ENCODE measurements at regions of chr10 and their contacts with region 1.

Region 1: DNA sequence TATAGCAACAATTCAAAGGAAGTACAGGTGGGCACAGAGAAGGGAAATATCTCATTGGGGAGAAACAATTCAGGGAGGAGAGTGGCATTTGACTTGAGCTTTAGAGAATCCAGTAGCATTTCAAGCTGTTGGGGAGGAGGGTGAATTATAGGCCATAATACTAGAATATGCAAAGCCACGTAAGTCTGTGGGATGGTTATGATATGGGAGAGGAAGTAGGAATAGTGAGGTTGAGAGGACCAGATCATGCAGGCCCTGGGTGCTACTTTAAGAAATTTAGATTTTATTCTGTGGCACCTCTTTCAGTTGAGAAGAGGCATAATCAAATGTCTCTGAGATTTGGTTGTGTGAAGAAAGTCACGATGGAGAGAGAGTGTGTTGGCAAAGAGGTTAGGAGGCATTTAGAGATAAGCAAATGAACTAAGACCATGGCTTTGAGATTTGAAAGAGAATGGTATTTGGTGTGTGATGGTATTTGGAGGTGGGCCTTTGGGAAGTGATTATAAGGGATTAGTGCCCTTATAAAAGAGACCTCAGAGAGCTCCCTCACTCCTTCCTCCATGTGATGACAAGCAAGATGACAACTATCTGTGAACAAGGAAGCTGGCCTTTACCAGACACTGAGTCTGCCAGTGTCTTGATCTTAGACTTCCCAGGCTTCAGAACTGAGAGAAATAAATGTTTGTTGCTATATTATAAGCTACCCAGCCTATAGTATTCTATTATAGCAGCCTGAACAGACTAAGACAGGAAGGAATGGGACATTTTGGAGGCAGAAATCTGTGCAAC is 15.1 kb downstream of the ADD3 start:
- H3K4me3 Mint-ChIP-seq: no peak overlapping the region
- H3K27ac Mint-ChIP-seq: peak overlapping the region; percentile 13
- H3K4me1 Mint-ChIP-seq: peaks cover 39% of the 10 kb centered on the region
- H3K27me3 Mint-ChIP-seq: no peaks in the 10 kb centered on the region

Region 2: DNA sequence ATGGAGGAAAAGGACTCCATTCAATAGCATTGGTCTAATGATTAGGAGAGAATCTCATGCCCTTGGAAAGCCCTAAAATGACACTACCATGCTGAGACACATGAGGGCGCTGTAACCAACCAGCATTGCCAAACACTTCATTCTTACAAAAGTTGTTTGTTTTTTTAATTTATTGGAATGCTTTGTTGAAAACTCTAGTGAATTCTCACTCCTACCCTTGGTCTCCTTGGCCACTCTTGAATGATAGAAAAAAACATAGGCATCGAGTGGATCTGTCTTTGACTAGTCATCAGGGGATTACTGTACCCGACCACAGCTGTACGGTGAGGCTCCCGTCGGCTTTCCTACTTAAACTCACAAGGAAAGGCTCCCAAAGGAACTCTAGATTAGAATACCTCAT is 44.4 kb before region 1 on chr10:
- intact Hi-C with region 1: loop called (anchors 5 kb)
- H3K4me3 Mint-ChIP-seq: no peak overlapping the region
- H3K27ac Mint-ChIP-seq: no peak overlapping the region
- H3K4me1 Mint-ChIP-seq: peaks cover 22% of the 10 kb centered on the region
- H3K27me3 Mint-ChIP-seq: no peaks in the 10 kb centered on the region

Region 3: DNA sequence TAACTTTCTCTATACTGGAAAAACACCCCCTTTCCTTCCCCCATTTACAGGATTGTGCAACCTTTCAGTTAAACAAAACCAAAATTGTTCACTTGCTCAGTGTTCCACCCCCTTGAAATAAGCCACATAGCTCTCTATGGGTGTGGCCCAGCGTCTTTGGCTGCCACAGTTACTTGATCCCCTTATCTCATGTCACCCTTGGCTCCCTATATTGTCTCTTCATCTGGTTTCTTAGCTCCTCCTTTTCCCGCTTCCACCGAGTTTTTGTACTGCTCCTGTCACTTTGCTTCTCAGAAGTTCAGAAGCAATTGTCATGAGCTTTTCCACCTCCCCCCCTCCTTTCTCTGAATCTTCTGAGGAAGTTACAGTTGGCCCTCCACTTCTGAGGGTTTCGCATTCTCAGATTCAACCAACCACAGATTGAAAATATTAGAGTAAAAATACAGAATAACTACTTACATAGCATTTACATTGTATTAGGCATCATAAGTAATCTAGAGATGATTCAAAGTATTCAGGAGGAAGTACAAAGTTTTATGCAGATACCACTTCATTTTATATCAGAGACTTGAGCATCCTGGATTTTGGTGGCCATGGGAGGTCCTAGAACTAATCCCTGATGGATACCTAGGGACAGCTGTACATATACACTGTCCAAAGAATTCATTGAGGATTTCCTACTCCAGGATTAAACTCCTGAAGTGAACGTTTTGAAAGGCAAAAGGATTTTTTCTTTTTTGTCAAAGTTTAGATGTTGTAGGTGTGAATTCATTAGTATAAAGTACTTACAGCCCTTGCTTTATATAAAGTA is 45.3 kb after region 1 on chr10:
- intact Hi-C with region 1: loop called (anchors 5 kb)
- H3K4me3 Mint-ChIP-seq: peak overlapping the region; percentile 64
- H3K27ac Mint-ChIP-seq: peak overlapping the region; percentile 89
- H3K4me1 Mint-ChIP-seq: peaks cover 28% of the 10 kb centered on the region
- H3K27me3 Mint-ChIP-seq: no peaks in the 10 kb centered on the region